Left ventricle myocardium superior (tissue), 1 donor: ENCODE measurements at regions of chr21 and their contacts with region 1.

Region 1: DNA sequence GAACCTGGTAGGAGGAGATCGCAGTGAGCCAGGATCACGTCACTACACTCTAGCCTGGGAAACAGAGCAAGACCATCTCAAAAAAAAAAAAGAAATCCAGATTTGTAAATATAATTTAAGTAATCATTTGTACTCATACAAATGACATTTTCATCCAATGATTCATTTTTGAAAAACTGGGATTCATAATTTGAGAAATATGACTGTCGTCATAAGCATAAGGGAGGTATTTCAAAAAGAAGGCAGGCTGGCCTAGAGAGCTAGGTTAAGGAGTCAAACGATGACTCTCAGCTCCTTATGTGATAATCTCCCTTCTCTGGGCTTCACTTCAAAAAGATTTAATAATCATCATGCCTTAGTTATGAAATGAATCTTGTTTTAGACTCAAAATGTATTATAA is 2.3 kb downstream of the GART start:
- DNase-seq: no peak
- ATAC-seq: no peak

Region 2: DNA sequence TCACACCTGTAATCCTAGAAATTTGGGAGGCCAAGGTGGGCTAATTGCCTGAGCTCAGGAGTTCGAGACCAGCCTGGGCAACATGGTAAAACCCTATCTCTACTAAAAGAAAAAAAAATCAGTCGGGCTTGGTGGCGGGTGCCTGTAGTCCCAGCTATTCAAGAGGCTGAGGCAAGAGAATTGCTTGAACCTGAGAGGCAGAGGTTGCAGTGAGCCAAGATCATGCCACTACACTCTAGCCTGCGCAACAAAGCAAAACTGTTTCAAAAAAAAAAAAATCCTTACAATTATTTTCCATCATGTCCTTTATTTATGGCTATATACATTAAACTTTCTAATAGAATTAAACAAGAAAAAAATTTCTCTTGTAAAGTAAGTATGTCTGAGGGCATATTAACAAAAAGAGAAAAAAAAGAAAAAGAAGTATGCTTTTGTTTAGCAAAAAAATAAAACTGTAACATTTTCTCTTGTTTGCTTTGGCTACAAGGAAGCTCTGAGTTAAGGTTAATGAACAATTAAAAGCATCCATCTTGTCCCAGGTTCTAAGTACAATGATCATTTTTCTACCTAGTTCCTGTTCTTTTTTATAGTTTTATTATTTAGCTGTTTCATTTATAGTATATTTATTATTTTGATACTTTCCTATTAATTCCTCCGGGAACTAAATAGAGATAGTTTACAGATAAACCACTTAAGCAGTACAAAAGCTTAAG is 77.9 kb before region 1 on chr21:
- intact Hi-C with region 1: no loop called
- DNase-seq: no peak
- ATAC-seq: no peak

Region 3: GRCh38 chr21:33510826-33511225 is 28.8 kb before region 1 on chr21:
- intact Hi-C with region 1: loop called (anchors 1 kb)
- DNase-seq: no peak
- ATAC-seq: no peak